ENCODE measurements at regions of chr11 and their contacts with region 1.

Region 1: DNA sequence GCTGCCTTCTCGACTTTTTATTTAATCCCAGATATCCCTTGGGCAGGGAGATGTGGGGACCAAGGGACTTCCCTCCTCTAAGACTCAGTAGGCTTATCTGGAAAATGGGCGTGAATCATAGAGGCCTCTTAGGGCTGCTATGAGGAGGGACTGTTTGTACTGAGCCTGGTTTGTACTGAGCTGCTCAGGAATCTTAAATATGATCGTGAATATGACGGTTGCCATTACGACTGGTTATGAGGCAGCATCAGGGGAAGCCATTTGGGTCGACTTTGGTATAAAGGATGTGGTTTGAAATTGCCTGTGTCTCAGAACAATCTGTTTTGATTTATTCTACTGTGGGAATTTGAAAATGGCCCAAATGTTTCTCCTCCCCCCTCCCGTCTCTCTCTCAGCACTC is 20.6 kb downstream of the TSPAN18 start:
- DNase-seq: no peak
- H3K4me3 ChIP-seq: no peak overlapping the region
- H3K27ac ChIP-seq: peak overlapping the region in 1 of 2 experiments; percentile 85; a peak in 2 of 4 replicates
- H3K4me1 ChIP-seq: peaks cover 0 to 73% of the 10 kb centered on the region in 2 experiments; a peak in 2 of 4 replicates
- H3K27me3 ChIP-seq: no peaks in the 10 kb centered on the region; the same call in 1 of the 2 replicates
- CTCF ChIP-seq: no peak
- EP300 ChIP-seq: no peak
- RAD21 ChIP-seq: no peak

Region 2: DNA sequence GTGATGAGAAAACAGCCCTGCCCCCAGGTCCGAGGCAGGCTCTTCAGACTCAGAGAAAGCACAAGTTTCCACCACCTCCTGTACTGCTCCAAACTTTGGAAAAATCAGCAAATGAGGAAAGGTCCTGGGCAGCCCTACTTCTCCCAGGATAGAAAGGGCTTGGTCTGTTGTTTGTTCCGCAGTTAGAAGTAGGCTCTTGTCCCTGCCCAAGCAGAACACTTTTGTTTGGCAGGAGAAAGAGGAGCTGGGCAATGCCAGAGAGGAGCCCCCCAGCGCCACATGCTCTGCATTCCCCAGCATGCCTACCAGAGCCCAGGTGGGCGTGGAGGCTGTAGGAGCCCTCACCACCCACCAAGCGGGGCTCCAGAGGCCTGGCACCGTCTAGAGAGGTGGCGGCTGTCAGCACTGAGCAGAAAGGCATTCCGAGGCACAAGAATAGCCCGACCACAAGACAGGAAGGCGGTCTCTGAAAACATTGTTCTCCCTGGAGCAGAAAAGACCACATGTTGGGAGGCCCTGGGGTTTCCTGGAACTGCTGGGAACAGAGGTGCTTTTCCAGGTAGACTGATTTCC is 272.1 kb before region 1 on chr11:
- CTCF ChIA-PET with region 1: no interaction called
- POLR2A ChIA-PET with region 1: no interaction called
- DNase-seq: no peak
- H3K4me3 ChIP-seq: no peak overlapping the region
- H3K27ac ChIP-seq: no peak overlapping the region
- H3K4me1 ChIP-seq: no peaks in the 10 kb centered on the region
- H3K27me3 ChIP-seq: peaks cover 19% of the 10 kb centered on the region; the same call in 1 of the 2 replicates
- CTCF ChIP-seq: no peak
- EP300 ChIP-seq: no peak
- RAD21 ChIP-seq: no peak

Region 3: DNA sequence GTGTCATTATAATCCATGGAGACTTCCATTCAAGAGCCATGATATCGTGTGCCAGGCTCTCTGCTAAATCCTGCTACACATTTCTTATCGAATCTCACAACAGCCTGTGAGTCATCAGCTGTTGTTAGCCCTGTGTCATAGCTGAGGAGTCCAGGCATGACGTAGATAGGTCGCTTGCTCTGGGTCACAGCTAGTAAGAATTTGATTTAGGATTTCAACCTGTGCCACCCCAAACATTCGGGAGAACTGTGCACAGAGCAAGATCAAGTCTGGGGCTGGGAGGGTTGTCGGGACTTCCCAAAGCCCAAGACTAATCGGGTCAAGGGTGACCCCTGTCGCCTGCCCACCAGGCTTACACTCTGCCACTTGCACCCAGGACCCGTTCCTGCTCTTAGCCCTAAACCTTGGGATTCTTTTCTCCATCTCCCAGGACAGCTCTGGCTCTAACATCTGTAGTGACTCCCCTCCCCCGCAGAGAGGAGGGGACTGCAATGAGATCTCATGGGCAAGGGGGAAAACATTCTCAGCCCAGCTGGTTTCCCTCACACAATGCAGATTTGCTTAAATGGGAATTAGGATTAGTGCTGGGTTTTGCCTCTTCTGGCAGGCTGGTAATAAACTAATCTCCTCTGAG is 13.7 kb after region 1 on chr11:
- CTCF ChIA-PET with region 1: interaction called, 12 read pairs
- POLR2A ChIA-PET with region 1: interaction called, 10 read pairs
- DNase-seq: peak; percentile 54
- H3K4me3 ChIP-seq: no peak overlapping the region
- H3K27ac ChIP-seq: peak overlapping the region in 1 of 2 experiments; percentile 96; a peak in 2 of 4 replicates
- H3K4me1 ChIP-seq: peaks cover 41 to 67% of the 10 kb centered on the region in 2 experiments
- H3K27me3 ChIP-seq: no peaks in the 10 kb centered on the region
- CTCF ChIP-seq: 0 out of 2 replicates have a peak, but pooled peaks have one; percentile 16
- EP300 ChIP-seq: peak in 1 of 2 experiments; percentile 36; a peak in 1 of 4 replicates
- RAD21 ChIP-seq: peak; percentile 43

Measured in SK-N-SH (cell line).